B cell (primary cell): ENCODE measurements at regions of chr16 and their contacts with region 1.

Region 1: GRCh38 chr16:28924732-28925385 is at the start of gene RABEP2:
- DNase-seq: peak; percentile 97
- ATAC-seq: peak; percentile 60
- H3K4me3 ChIP-seq: peak within 1 kb of the TSS; percentile 58 to 97 (median 92)
- H3K4me3 Mint-ChIP-seq: peak within 1 kb of the TSS; percentile 95
- H3K27ac ChIP-seq: peak within 1 kb of the TSS; percentile 87 to 91
- H3K27ac Mint-ChIP-seq: peak within 1 kb of the TSS; percentile 98
- H3K4me1 ChIP-seq: peaks cover 30 to 61% of the 10 kb centered on the region in 2 donors
- H3K4me1 Mint-ChIP-seq: peaks cover 51% of the 10 kb centered on the region
- H3K27me3 ChIP-seq: no peaks in the 10 kb centered on the region
- H3K27me3 Mint-ChIP-seq: no peaks in the 10 kb centered on the region
- CTCF ChIP-seq: no peak
- total RNA-seq, gene RABEP2: 132 and 136 TPM in 2 replicates

Region 2: GRCh38 chr16:28823872-28824716 is 100.8 kb before region 1 on chr16:
- CTCF ChIA-PET with region 1: no interaction called
- POLR2A ChIA-PET with region 1: interaction called, 15 read pairs
- intact Hi-C with region 1: loop called (anchors 1 kb)
- DNase-seq: peak; percentile 97
- ATAC-seq: peak; percentile 76
- H3K4me3 ChIP-seq: peak overlapping the region; percentile 76 to 95 (median 87)
- H3K4me3 Mint-ChIP-seq: peak overlapping the region; percentile 98
- H3K27ac ChIP-seq: peak overlapping the region; percentile 98 to 99
- H3K27ac Mint-ChIP-seq: peak overlapping the region; percentile 97
- H3K4me1 ChIP-seq: peaks cover 19 to 23% of the 10 kb centered on the region in 2 donors
- H3K4me1 Mint-ChIP-seq: peaks cover 28% of the 10 kb centered on the region
- H3K27me3 ChIP-seq: no peaks in the 10 kb centered on the region
- H3K27me3 Mint-ChIP-seq: no peaks in the 10 kb centered on the region
- CTCF ChIP-seq: no peak

Region 3: DNA sequence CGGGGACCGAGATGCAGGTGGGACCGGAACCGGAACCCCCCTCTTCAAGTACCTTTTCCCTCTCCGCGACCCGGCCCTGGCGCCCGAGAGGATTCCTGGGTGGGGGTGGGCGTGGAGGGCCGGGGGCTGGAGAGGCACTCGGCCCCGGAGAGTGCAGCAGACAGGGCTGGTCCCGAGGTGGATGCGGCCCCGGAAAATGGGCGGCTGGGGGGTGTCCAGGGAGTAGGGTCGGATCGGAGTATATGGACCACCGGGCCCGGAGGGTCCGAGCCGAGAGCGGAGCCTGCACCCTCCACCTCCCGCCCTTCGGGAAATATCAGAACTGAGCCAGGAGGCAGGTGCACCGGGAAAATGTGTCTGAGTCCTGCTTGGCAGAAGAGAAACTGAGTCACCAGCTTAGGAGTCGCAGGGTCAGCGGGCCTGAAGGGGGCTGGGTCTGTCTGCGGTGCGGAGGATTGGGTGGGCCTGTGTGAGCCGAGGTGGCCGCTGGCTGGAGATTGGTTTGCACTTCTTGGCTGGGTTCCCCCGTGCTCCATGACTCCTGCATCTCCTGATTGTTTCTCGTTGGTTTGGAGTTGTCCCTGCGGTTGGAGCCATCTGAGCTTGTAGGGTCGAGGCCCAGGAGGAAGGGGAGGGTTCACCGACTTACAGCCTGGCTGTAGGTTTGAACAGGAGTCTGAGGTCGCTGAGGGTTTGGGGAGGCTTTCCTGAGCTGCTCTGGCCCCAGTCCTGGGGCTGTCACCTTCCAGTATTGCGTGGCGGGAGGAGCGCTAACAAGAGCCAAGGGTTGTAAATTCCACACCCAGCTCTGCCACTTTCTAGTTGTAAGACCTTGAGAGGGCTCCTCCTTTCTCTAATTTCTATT is 60.7 kb before region 1 on chr16:
- CTCF ChIA-PET with region 1: interaction called, 7 read pairs
- POLR2A ChIA-PET with region 1: interaction called, 11 read pairs
- intact Hi-C with region 1: loop called (anchors 1 kb)
- DNase-seq: peak; percentile 41
- ATAC-seq: no peak
- H3K4me3 ChIP-seq: peak overlapping the region; percentile 9 to 98 (median 77)
- H3K4me3 Mint-ChIP-seq: peak overlapping the region; percentile 100
- H3K27ac ChIP-seq: peak overlapping the region; percentile 79 to 82
- H3K27ac Mint-ChIP-seq: peak overlapping the region; percentile 99
- H3K4me1 ChIP-seq: peaks cover 5 to 25% of the 10 kb centered on the region in 2 donors
- H3K4me1 Mint-ChIP-seq: peaks cover 28% of the 10 kb centered on the region
- H3K27me3 ChIP-seq: no peaks in the 10 kb centered on the region
- H3K27me3 Mint-ChIP-seq: no peaks in the 10 kb centered on the region
- CTCF ChIP-seq: no peak

Region 4: GRCh38 chr16:28879841-28880588 is 44.8 kb before region 1 on chr16:
- CTCF ChIA-PET with region 1: interaction called, 6 read pairs
- POLR2A ChIA-PET with region 1: interaction called, 12 read pairs
- intact Hi-C with region 1: loop called (anchors 1 kb)
- DNase-seq: peak; percentile 89
- ATAC-seq: peak; percentile 99
- H3K4me3 ChIP-seq: peak overlapping the region; percentile 53 to 94 (median 87)
- H3K4me3 Mint-ChIP-seq: peak overlapping the region; percentile 92
- H3K27ac ChIP-seq: peak overlapping the region in 1 of 2 donors; percentile 43
- H3K27ac Mint-ChIP-seq: no peak overlapping the region
- H3K4me1 ChIP-seq: peaks cover 13 to 17% of the 10 kb centered on the region in 2 donors
- H3K4me1 Mint-ChIP-seq: peaks cover 15% of the 10 kb centered on the region
- H3K27me3 ChIP-seq: peaks cover 0 to 8% (median 1%) of the 10 kb centered on the region in 4 experiments
- H3K27me3 Mint-ChIP-seq: peaks cover 6% of the 10 kb centered on the region
- CTCF ChIP-seq: no peak

Region 5: DNA sequence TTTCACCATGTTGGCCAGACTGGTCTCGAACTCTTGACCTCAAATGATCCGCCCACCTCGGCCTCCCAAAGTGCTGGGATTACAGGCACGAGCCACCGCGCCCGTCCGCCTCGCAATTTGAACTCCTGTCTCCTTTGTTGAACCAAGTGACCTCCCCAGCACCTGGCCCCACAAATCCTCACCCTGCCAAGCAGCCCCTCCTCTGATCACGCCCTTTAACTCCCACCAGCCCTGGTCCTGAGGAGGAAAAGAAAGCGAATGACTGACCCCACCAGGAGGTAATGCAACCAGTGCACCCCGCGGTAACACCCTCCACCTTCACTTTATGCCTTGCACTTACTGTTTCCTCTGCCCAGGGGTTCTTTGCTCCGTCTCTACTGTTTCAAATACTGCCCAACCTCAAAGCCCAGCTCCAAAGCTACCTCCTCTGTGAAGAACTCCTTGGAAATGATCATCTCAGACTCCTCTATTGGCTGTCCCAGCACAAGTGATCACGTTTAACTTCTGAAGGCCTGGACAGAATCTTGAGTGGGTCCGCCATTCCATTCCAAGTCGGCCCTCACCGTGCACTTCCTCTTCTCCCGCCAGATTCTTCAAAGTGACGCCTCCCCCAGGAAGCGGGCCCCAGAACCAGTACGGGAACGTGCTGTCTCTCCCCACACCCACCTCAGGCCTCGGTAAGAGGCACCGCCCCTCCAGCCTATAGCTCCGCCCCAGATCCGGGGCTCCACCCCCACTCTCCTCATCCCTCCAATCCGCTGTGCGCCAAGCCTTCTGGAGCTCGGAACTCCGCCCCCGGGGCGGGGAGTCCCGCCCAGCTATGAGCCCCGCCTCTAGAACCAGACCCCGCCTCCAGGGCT is 11.3 kb after region 1 on chr16:
- CTCF ChIA-PET with region 1: interaction called, 114 read pairs
- POLR2A ChIA-PET with region 1: interaction called, 34 read pairs
- intact Hi-C with region 1: loop called (anchors 1 kb)
- DNase-seq: peak; percentile 90
- ATAC-seq: peak; percentile 89
- H3K4me3 ChIP-seq: peak overlapping the region in 3 of 5 experiments; percentile 12 to 23 (median 12)
- H3K4me3 Mint-ChIP-seq: peak overlapping the region; percentile 74
- H3K27ac ChIP-seq: peak overlapping the region; percentile 68 to 75
- H3K27ac Mint-ChIP-seq: peak overlapping the region; percentile 82
- H3K4me1 ChIP-seq: peaks cover 48 to 60% of the 10 kb centered on the region in 2 donors
- H3K4me1 Mint-ChIP-seq: peaks cover 60% of the 10 kb centered on the region
- H3K27me3 ChIP-seq: no peaks in the 10 kb centered on the region
- H3K27me3 Mint-ChIP-seq: no peaks in the 10 kb centered on the region
- CTCF ChIP-seq: no peak

Region 6: DNA sequence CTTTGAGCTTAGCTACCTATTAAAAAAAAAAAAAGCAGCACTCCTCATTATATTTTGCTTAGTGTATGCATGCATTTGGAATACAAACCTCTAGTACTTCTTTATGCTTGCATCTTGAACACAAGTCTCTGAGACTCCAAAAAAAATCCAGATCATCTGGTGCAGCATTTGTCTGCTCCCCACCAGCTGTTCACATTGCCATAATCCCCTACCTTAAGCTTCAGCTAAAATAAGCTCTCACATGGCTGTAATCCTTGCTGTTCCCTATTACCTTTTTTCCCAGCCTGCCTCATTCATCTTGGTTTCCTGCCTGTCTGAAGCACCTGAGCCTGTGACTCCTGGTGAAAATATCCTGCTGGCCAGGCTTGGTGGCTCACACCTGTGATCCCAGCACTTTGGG is 18.4 kb after region 1 on chr16:
- CTCF ChIA-PET with region 1: interaction called, 114 read pairs
- POLR2A ChIA-PET with region 1: interaction called, 26 read pairs
- intact Hi-C with region 1: loop called (anchors 1 kb)
- DNase-seq: no peak
- ATAC-seq: no peak
- H3K4me3 ChIP-seq: no peak overlapping the region
- H3K4me3 Mint-ChIP-seq: no peak overlapping the region
- H3K27ac ChIP-seq: no peak overlapping the region
- H3K27ac Mint-ChIP-seq: no peak overlapping the region
- H3K4me1 ChIP-seq: peaks cover 9 to 10% of the 10 kb centered on the region in 2 donors
- H3K4me1 Mint-ChIP-seq: peaks cover 17% of the 10 kb centered on the region
- H3K27me3 ChIP-seq: no peaks in the 10 kb centered on the region
- H3K27me3 Mint-ChIP-seq: no peaks in the 10 kb centered on the region
- CTCF ChIP-seq: no peak

Region 7: GRCh38 chr16:28974437-28975157 is 49.7 kb after region 1 on chr16 and contains the start of gene SPNS1:
- CTCF ChIA-PET with region 1: interaction called, 11 read pairs
- POLR2A ChIA-PET with region 1: no interaction called
- intact Hi-C with region 1: no loop called
- DNase-seq: peak; percentile 96
- ATAC-seq: peak; percentile 89
- H3K4me3 ChIP-seq: peak within 1 kb of the TSS; percentile 75 to 95 (median 83)
- H3K4me3 Mint-ChIP-seq: peak within 1 kb of the TSS; percentile 96
- H3K27ac ChIP-seq: peak within 1 kb of the TSS; percentile 65 to 90
- H3K27ac Mint-ChIP-seq: peak within 1 kb of the TSS; percentile 95
- H3K4me1 ChIP-seq: peaks cover 13 to 17% of the 10 kb centered on the region in 2 donors
- H3K4me1 Mint-ChIP-seq: peaks cover 30% of the 10 kb centered on the region
- H3K27me3 ChIP-seq: no peaks in the 10 kb centered on the region
- H3K27me3 Mint-ChIP-seq: no peaks in the 10 kb centered on the region
- CTCF ChIP-seq: no peak
- total RNA-seq, gene SPNS1: 36.4 and 37.8 TPM in 2 replicates